ENCODE measurements at regions of chr19 and their contacts with region 1.

Region 1: GRCh38 chr19:3210347-3211017 is 14.0 kb upstream of the CELF5 start:
- DNase-seq: peak; percentile 60 to 78
- ATAC-seq: peak; percentile 77 to 97 (median 91)
- H3K4me3 ChIP-seq: no peak overlapping the region
- H3K4me3 Mint-ChIP-seq: no peak overlapping the region
- H3K27ac ChIP-seq: no peak overlapping the region
- H3K27ac Mint-ChIP-seq: peak overlapping the region in 1 of 2 donors; percentile 24
- H3K4me1 ChIP-seq: no peaks in the 10 kb centered on the region
- H3K4me1 Mint-ChIP-seq: peaks cover 0 to 5% of the 10 kb centered on the region in 2 donors
- H3K27me3 ChIP-seq: no peaks in the 10 kb centered on the region
- H3K27me3 Mint-ChIP-seq: no peaks in the 10 kb centered on the region
- CTCF ChIP-seq: peak; percentile 64

Region 2: DNA sequence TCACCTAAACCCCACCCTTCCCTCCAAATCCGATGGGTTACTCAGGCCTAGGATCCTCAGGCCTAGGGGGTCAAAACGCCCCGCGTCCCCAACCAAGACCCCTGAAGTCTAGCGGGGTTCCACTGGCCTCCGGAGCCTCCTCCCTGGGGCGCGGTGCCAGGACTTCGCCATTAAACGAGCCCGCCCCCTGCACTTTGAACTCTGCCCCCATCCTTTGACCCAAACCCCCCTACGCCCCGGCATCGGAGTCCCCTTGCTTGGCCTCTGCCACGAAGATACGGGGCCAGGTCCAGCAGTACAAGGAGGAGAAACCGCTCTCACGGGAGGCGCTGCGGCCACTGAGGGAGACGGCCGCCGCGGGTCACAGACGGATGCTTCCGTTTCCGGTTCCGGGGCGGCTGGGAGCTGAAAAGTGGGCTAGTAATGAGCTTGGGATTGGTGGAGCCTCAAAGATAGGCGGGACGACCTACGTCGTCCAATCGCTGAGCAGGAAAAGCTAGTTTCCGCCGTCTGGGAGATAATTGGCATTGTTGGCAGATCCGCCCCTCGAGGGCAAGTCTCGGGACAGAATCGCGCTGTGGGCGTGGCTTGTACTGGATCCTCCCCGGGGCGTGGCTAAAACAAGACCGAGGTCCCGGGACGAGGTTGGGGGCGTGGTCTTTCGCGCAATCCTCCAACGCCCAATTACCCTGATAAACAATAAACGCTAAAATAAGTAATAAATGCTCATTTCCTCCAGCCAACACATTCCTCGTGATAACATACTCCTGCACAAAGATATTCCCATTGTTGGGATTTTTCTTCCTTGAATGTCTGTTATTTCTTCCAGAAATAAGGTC is 260.0 kb before region 1 on chr19:
- intact Hi-C with region 1: loop called (anchors 5 kb)
- DNase-seq: peak; percentile 100
- ATAC-seq: peak; percentile 90 to 97 (median 94)
- H3K4me3 ChIP-seq: peak overlapping the region; percentile 68
- H3K4me3 Mint-ChIP-seq: peak overlapping the region; percentile 95
- H3K27ac ChIP-seq: peak overlapping the region; percentile 92
- H3K27ac Mint-ChIP-seq: peak overlapping the region; percentile 97 to 99
- H3K4me1 ChIP-seq: peaks cover 17% of the 10 kb centered on the region
- H3K4me1 Mint-ChIP-seq: peaks cover 24 to 25% of the 10 kb centered on the region in 2 donors
- H3K27me3 ChIP-seq: no peaks in the 10 kb centered on the region
- H3K27me3 Mint-ChIP-seq: no peaks in the 10 kb centered on the region
- CTCF ChIP-seq: no peak

Region 3: DNA sequence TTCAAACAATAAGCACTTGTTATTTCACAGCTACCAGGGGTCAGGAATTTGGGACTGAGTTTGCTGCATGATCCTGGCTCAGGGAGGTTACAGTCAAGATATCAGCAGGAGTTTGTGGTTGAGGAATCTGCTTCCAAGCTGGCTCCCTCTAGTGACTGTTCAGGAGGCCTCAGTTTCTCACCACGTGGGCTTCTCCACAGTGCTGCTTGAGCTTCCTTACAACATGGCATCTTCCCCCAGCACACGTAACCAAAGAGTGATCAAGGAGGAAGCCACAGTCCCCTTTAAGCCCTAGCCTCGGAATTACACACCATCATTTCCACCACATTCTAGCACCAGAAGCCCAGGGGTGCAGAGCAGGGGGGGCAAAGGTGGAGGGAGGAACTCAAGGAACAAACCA is 42.8 kb after region 1 on chr19:
- intact Hi-C with region 1: no loop called
- DNase-seq: no peak
- ATAC-seq: no peak
- H3K4me3 ChIP-seq: no peak overlapping the region
- H3K4me3 Mint-ChIP-seq: no peak overlapping the region
- H3K27ac ChIP-seq: no peak overlapping the region
- H3K27ac Mint-ChIP-seq: no peak overlapping the region
- H3K4me1 ChIP-seq: no peaks in the 10 kb centered on the region
- H3K4me1 Mint-ChIP-seq: no peaks in the 10 kb centered on the region
- H3K27me3 ChIP-seq: no peaks in the 10 kb centered on the region
- H3K27me3 Mint-ChIP-seq: peaks cover 0 to 15% of the 10 kb centered on the region in 2 donors
- CTCF ChIP-seq: no peak

Region 4: DNA sequence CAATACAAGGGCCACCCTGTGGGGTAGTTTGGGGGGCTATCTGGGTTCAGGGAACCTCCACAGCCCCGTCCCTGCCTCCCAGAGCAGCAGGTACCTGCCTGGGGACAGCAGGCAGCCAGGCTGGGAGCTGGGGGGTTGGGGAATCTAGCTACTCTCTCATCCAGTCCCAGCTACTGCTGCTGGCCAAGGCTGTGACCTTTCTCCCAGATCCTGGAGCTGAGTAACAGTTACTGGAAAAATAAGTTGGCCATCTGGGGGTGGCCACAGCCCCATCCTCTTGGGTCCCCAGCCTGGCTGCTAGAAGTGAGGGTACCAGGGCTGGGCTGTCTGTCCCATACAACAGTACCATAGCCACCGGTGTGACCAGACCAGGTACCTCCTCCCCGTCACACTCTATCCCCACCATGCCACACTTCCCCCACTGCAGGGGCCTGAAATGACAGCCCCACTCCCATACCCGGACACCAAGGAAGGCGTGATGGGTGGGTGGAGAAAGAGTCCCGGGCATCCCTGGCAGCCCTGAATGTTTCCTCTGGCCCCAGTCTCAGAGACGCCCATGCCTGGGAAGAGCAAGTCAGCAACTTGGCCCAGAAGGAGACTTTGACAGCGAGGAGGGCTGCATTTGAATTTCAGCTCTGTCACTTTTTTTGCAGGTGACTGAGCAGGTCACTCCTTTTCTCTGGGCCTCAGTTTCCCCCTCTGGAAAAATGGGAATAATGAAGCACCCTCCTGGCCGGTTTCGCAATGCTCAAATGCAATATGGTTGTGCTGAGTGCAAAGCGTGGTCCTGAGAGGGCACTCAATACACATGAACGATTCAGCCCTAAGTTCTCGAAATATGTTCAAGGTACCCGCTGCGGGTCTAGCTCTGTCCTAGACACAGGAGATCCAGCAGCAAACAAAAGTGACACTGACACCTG is 125.2 kb after region 1 on chr19:
- intact Hi-C with region 1: no loop called
- DNase-seq: no peak
- ATAC-seq: no peak
- H3K4me3 ChIP-seq: no peak overlapping the region
- H3K4me3 Mint-ChIP-seq: no peak overlapping the region
- H3K27ac ChIP-seq: no peak overlapping the region
- H3K27ac Mint-ChIP-seq: no peak overlapping the region
- H3K4me1 ChIP-seq: peaks cover 15% of the 10 kb centered on the region
- H3K4me1 Mint-ChIP-seq: peaks cover 4 to 7% of the 10 kb centered on the region in 2 donors
- H3K27me3 ChIP-seq: no peaks in the 10 kb centered on the region
- H3K27me3 Mint-ChIP-seq: peaks cover 0 to 3% of the 10 kb centered on the region in 2 donors
- CTCF ChIP-seq: no peak

Region 5: GRCh38 chr19:3950871-3951861 is 740.7 kb after region 1 on chr19:
- intact Hi-C with region 1: no loop called
- DNase-seq: no peak
- ATAC-seq: peak; percentile 63 to 70 (median 68)
- H3K4me3 ChIP-seq: peak overlapping the region; percentile 33
- H3K4me3 Mint-ChIP-seq: peak overlapping the region; percentile 82
- H3K27ac ChIP-seq: peak overlapping the region; percentile 63
- H3K27ac Mint-ChIP-seq: peak overlapping the region; percentile 81 to 88
- H3K4me1 ChIP-seq: peaks cover 27% of the 10 kb centered on the region
- H3K4me1 Mint-ChIP-seq: peaks cover 13 to 15% of the 10 kb centered on the region in 2 donors
- H3K27me3 ChIP-seq: no peaks in the 10 kb centered on the region
- H3K27me3 Mint-ChIP-seq: no peaks in the 10 kb centered on the region
- CTCF ChIP-seq: no peak